Activated naive CD4-positive, alpha-beta T cell treated with anti-CD3 and anti-CD28 coated beads, Interleukin-2, amount 10 ng/mL, durations not matched to agents 7 days and 5 days (primary cell): ENCODE measurements at regions of chr20 and their contacts with region 1.

Region 1: DNA sequence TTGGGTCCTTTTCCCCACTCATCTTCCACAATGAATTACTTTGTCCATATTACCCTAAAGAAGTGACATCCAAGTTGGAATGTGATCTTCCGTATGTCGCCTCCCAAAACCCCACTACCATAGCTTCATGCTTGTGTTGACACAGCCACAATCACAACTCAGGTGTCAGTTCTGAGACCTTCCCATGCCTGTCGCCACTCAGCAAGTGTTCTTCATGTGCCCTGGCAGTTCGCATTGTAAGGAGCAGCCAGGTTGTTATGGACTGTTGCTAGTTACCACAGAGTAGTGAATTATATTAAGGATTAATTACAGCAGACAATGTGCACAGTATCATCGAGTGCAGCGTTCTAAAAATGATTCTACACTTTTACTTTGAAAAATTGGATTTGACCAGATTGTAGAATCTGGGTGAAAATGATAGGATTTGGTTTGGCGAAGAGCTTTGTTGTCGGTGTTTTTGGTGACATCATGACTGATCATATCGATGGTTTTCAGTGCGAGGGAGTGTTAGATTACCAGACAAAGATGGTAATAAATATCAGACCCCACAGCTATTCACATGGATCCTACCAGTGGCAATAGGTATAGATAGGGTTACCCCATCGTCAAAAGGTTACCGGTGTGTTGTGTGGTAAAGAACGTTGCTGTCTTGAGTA is 1.7 kb downstream of the PCMTD2 start:
- DNase-seq: no peak
- H3K4me3 Mint-ChIP-seq: peak overlapping the region; percentile 83
- H3K27ac Mint-ChIP-seq: peak overlapping the region; percentile 91
- H3K4me1 Mint-ChIP-seq: peaks cover 62% of the 10 kb centered on the region
- H3K27me3 Mint-ChIP-seq: peaks cover 5% of the 10 kb centered on the region

Region 2: DNA sequence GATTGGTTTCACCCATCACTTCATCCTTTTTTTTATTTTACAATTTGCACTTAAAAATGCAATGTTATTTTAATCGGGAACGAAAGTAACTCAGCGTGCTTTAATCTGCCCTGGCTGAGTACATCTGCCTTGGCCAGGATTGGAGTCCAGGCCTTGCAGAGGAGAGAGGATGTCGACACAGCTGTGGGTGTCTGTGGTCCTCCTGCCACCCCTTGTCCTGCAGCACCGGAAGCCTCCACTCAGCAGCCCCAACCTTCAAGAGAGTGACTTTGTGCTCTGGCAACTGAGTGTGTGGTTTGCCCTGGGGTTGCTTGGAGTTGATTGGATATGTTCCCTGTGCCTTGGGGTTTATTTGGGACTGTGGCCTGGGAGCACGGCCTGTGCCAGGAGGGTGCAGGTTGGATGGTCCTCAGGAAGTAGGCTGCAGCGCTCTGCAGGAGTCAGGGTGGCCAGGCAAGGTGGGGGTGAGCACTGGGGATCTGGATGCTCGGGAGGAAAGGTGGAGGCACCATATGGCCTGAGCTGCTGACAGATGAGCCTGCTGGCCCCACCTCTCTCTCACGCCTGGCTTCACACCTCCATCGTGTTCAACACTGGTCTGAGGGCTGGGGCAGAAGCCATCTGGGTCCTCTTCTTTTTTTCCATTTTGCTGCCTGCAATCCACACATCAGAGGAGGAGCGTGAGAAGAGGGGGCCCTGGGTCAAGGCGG is 88.7 kb before region 1 on chr20:
- CTCF ChIA-PET with region 1: no interaction called
- DNase-seq: no peak
- H3K4me3 Mint-ChIP-seq: no peak overlapping the region
- H3K27ac Mint-ChIP-seq: no peak overlapping the region
- H3K4me1 Mint-ChIP-seq: no peaks in the 10 kb centered on the region
- H3K27me3 Mint-ChIP-seq: peaks cover 34% of the 10 kb centered on the region

Region 3: GRCh38 chr20:64280460-64280843 is 23.2 kb after region 1 on chr20:
- CTCF ChIA-PET with region 1: interaction called, 14 read pairs
- DNase-seq: no peak
- H3K4me3 Mint-ChIP-seq: no peak overlapping the region
- H3K27ac Mint-ChIP-seq: no peak overlapping the region
- H3K4me1 Mint-ChIP-seq: peaks cover 6% of the 10 kb centered on the region
- H3K27me3 Mint-ChIP-seq: peaks cover 4% of the 10 kb centered on the region